MCF 10A (cell line): ENCODE measurements at regions of chr4 and their contacts with region 1.

Region 1: GRCh38 chr4:138090150-138090917 is 151.8 kb downstream of the SLC7A11 start:
- DNase-seq: peak; percentile 90
- H3K4me3 Mint-ChIP-seq: peak overlapping the region; percentile 75
- H3K27ac Mint-ChIP-seq: no peak overlapping the region
- H3K4me1 Mint-ChIP-seq: peaks cover 7% of the 10 kb centered on the region
- H3K27me3 Mint-ChIP-seq: no peaks in the 10 kb centered on the region
- CTCF ChIP-seq: peak; percentile 58

Region 2: DNA sequence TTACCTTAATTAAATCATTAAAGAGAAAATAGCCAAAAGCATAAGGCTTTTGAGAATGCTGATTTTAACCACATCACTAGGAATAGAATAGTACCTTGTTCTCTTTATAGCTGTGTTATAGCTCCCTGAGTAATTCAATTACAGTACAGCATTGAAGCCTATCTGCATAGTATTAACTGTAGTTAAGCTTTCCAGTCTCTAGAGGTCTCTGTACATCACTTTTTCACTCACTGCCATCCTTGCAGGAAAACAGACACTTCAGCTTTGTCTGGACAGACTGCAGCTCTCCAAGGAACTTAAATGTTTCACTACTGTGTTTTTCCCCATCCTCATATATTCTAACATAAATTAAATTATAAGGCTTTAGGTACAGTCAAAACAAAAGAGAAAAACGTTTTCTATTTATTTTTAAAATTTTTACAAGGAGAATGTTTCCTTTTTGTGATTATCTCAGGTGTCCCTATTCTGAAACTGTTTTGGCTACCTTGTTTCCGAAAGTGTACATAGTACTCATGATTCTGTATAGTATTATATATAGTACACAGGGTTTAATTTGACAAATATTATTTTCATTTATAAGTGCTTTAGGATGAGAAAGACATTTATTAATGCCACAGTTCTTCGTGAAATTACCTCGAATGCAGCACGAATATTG is 965.9 kb before region 1 on chr4:
- CTCF ChIA-PET with region 1: interaction called, 4 read pairs
- POLR2A ChIA-PET with region 1: interaction called, 3 read pairs
- intact Hi-C with region 1: loop called (anchors 1 kb)
- DNase-seq: peak; percentile 77
- H3K4me3 Mint-ChIP-seq: peak overlapping the region; percentile 72
- H3K27ac Mint-ChIP-seq: peak overlapping the region; percentile 41
- H3K4me1 Mint-ChIP-seq: peaks cover 5% of the 10 kb centered on the region
- H3K27me3 Mint-ChIP-seq: no peaks in the 10 kb centered on the region
- CTCF ChIP-seq: peak; percentile 60

Region 3: GRCh38 chr4:137819964-137820383 is 270.4 kb before region 1 on chr4:
- CTCF ChIA-PET with region 1: interaction called, 106 read pairs
- POLR2A ChIA-PET with region 1: interaction called, 7 read pairs
- intact Hi-C with region 1: loop called (anchors 1 kb)
- DNase-seq: peak; percentile 80
- H3K4me3 Mint-ChIP-seq: no peak overlapping the region
- H3K27ac Mint-ChIP-seq: no peak overlapping the region
- H3K4me1 Mint-ChIP-seq: peaks cover 12% of the 10 kb centered on the region
- H3K27me3 Mint-ChIP-seq: no peaks in the 10 kb centered on the region
- CTCF ChIP-seq: peak; percentile 78

Region 4: GRCh38 chr4:138035781-138036258 is 54.5 kb before region 1 on chr4:
- CTCF ChIA-PET with region 1: interaction called, 205 read pairs
- POLR2A ChIA-PET with region 1: interaction called, 21 read pairs
- intact Hi-C with region 1: loop called (anchors 1 kb)
- DNase-seq: peak; percentile 72
- H3K4me3 Mint-ChIP-seq: no peak overlapping the region
- H3K27ac Mint-ChIP-seq: peak overlapping the region; percentile 35
- H3K4me1 Mint-ChIP-seq: peaks cover 19% of the 10 kb centered on the region
- H3K27me3 Mint-ChIP-seq: no peaks in the 10 kb centered on the region
- CTCF ChIP-seq: peak; percentile 69

Region 5: GRCh38 chr4:138062929-138063328 is 27.4 kb before region 1 on chr4:
- CTCF ChIA-PET with region 1: interaction called, 23 read pairs
- POLR2A ChIA-PET with region 1: interaction called, 3 read pairs
- intact Hi-C with region 1: no loop called
- DNase-seq: peak; percentile 16
- H3K4me3 Mint-ChIP-seq: no peak overlapping the region
- H3K27ac Mint-ChIP-seq: no peak overlapping the region
- H3K4me1 Mint-ChIP-seq: no peaks in the 10 kb centered on the region
- H3K27me3 Mint-ChIP-seq: no peaks in the 10 kb centered on the region
- CTCF ChIP-seq: no peak

Region 6: GRCh38 chr4:138182838-138183426 is 92.6 kb after region 1 on chr4:
- CTCF ChIA-PET with region 1: interaction called, 12 read pairs
- POLR2A ChIA-PET with region 1: interaction called, 3 read pairs
- intact Hi-C with region 1: no loop called
- DNase-seq: peak; percentile 54
- H3K4me3 Mint-ChIP-seq: no peak overlapping the region
- H3K27ac Mint-ChIP-seq: no peak overlapping the region
- H3K4me1 Mint-ChIP-seq: peaks cover 5% of the 10 kb centered on the region
- H3K27me3 Mint-ChIP-seq: no peaks in the 10 kb centered on the region
- CTCF ChIP-seq: peak; percentile 39

Region 7: GRCh38 chr4:138680989-138681604 is 590.8 kb after region 1 on chr4:
- CTCF ChIA-PET with region 1: interaction called, 15 read pairs
- POLR2A ChIA-PET with region 1: interaction called, 3 read pairs
- intact Hi-C with region 1: loop called (anchors 1 kb)
- DNase-seq: peak; percentile 88
- H3K4me3 Mint-ChIP-seq: no peak overlapping the region
- H3K27ac Mint-ChIP-seq: no peak overlapping the region
- H3K4me1 Mint-ChIP-seq: peaks cover 6% of the 10 kb centered on the region
- H3K27me3 Mint-ChIP-seq: peaks cover 10% of the 10 kb centered on the region
- CTCF ChIP-seq: peak; percentile 78